ENCODE measurements at regions of chr2 and their contacts with region 1.

Region 1: DNA sequence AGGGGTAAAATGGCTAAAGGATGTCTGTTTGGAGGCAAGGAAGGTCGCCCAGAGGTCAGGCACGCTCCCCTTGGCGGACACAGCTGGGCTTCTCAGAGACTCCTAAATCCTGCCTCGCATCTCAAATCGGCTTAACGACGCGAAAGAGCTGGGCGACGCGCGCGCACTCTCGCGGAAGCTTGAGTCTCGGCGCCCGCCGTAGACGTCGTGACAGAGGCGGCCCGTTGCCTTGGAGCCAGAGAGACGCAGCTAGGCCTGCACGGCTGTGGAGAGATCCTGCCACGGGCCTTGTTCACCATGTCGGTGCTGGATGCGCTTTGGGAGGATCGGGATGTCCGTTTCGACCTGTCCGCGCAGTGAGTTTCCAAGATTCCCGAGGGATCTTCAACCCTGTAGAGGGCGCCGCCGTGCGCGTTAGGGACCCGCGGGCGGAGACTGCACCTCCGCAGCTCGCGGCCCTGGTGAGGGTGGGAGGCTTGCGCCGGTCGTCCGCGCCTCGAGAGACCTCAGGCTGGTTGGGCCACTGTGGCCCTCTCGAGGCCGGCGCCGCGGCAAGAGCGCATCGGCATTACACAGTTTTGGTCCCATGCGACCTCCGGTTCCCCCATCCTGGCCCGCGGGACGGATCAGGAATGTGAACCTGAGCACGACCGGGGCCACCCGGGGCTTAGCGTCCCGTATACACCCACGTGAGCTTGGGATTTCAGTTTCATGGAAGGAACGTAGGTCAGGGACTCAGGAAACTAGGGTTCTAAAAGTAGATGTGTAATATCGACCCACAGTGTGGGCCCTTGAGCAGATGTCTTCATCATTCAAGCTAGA is at the start of gene BBS5:
- DNase-seq: peak; percentile 72
- ATAC-seq: peak; percentile 83
- H3K4me3 ChIP-seq: peak within 1 kb of the TSS; percentile 67
- H3K27ac ChIP-seq: no peak within 1 kb of the TSS; the same call in 1 of the 2 replicates
- H3K4me1 ChIP-seq: peaks cover 18% of the 10 kb centered on the region
- H3K27me3 ChIP-seq: no peaks in the 10 kb centered on the region
- CTCF ChIP-seq: peak; percentile 76
- total RNA-seq, gene BBS5: 3.3 and 3.8 TPM in 2 replicates

Region 2: DNA sequence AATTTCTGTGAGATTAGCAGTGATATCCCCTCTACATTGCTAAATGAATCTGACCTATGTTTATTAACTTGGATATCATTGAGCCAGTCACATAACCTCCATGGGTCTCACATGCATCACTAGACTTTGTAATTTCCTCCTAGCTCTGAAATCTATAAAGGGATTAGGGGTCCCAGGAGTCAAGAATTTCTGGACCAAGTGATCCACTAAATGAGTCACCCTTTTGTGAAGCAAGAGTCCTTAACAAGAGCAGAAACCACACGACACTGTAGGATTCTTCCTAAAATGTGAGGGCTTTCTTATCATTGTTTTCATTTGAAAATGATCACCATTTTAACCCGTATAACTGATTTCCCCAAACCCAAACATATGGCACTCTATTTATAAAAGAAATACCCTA is 319.8 kb before region 1 on chr2:
- CTCF ChIA-PET with region 1: no interaction called
- POLR2A ChIA-PET with region 1: no interaction called
- intact Hi-C with region 1: no loop called
- DNase-seq: no peak
- ATAC-seq: no peak
- H3K4me3 ChIP-seq: no peak overlapping the region
- H3K27ac ChIP-seq: no peak overlapping the region
- H3K4me1 ChIP-seq: no peaks in the 10 kb centered on the region
- H3K27me3 ChIP-seq: peaks cover 12% of the 10 kb centered on the region; the same call in 1 of the 2 replicates
- CTCF ChIP-seq: no peak

Region 3: GRCh38 chr2:169507698-169508097 is 28.2 kb after region 1 on chr2:
- CTCF ChIA-PET with region 1: interaction called, 5 read pairs
- POLR2A ChIA-PET with region 1: interaction called, 8 read pairs
- intact Hi-C with region 1: loop called (anchors 1 kb)
- DNase-seq: peak; percentile 85
- ATAC-seq: peak; percentile 76
- H3K4me3 ChIP-seq: no peak overlapping the region
- H3K27ac ChIP-seq: peak overlapping the region; percentile 79
- H3K4me1 ChIP-seq: peaks cover 47% of the 10 kb centered on the region
- H3K27me3 ChIP-seq: no peaks in the 10 kb centered on the region
- CTCF ChIP-seq: no peak

Region 4: DNA sequence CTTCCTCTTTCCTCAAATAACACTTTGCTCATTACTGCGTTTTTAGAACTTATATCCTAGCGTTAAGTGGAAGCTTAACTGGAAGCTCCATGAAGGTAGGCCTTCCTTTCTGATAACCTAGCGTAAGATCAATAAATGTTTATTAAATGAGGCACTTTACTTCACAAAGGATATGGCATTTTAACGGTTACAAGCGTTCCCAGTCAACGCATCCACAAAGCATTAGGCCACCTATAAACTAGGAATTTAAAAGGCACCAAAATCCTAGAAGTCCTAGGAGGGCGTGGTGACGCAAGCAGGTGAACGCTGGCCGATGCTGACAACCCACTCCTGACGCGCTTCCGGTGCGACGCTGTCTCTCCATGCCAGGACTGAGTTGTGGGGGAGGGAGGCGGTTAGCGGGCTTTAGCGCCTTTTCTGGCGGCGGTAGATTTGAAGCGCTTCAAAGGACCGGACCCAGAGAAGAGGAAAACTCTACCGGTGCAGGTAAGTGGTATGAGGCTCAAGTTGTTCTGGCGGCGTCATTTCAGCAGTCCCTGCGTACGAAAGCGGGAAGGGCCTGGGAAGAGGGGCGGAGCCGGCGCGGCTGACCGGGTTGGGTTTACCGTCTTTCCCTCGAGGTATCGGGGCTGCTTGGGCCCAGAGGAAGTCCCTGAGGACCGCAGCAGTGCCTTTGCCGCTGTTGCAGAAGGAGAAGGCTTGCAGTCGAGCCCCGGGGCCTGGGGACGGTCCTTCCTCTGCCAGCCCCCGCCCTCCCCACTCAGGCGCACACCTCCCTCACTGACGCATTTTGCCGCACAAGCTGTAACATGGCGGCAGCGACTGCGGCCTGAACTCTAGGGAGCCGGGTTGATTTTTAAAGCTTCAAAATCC is 104.8 kb after region 1 on chr2 and contains the start of gene PPIG:
- CTCF ChIA-PET with region 1: interaction called, 3 read pairs
- POLR2A ChIA-PET with region 1: no interaction called
- intact Hi-C with region 1: loop called (anchors 10 kb)
- DNase-seq: peak; percentile 90
- ATAC-seq: peak; percentile 89
- H3K4me3 ChIP-seq: peak within 1 kb of the TSS; percentile 88
- H3K27ac ChIP-seq: peak within 1 kb of the TSS; percentile 82
- H3K4me1 ChIP-seq: peaks cover 5% of the 10 kb centered on the region; the same call in 1 of the 2 replicates
- H3K27me3 ChIP-seq: no peaks in the 10 kb centered on the region
- CTCF ChIP-seq: no peak
- total RNA-seq, gene PPIG: 20.9 and 33.7 TPM in 2 replicates

Region 5: DNA sequence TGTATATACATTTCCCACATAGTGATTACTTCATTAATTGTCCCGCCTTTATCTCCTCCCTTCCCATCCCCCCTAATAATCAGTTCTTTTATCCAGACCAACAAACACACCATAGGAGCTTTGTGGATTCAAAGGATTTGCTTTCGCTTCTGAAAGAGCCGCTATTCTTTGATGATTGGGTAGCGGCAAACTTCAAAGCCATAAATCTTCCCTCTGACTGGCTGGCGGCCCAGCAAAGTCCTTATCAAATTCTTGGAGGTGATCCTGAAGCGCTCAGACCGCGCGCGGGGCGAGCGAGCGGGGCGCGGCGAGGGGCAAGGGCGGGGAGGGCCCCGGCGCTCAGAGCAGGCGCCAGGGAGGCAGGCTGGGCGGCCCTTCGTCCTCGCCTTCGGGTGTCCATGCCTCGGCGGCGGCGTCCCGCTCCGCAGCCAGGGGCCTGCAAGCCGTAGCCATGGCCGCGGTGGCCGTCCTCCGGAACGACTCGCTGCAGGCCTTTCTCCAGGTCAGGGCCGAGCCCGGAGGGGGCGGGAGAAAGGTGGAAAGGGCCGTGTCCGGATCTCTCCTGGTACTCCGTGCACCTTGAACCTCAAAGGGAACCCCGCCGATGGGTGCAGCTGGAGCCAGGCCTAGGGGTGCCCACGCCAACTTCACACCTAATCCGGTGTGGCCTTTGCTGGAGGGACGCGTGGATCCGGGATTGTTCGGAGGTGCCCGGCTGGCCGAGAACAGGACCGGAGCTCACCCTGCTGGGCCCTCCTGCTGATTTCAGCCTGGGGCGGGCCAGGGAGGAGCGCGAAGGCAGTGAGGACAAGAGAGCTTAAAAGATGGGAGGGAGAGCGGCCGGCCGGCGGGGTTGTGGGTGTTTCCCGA is 1235.8 kb after region 1 on chr2 and contains the start of gene SP5:
- CTCF ChIA-PET with region 1: no interaction called
- POLR2A ChIA-PET with region 1: no interaction called
- intact Hi-C with region 1: no loop called
- DNase-seq: peak; percentile 65
- ATAC-seq: peak; percentile 73
- H3K4me3 ChIP-seq: peak within 1 kb of the TSS; percentile 74
- H3K27ac ChIP-seq: no peak within 1 kb of the TSS
- H3K4me1 ChIP-seq: no peaks in the 10 kb centered on the region; the same call in 1 of the 2 replicates
- H3K27me3 ChIP-seq: no peaks in the 10 kb centered on the region
- CTCF ChIP-seq: peak; percentile 35; the same call in 1 of the 2 replicates
- total RNA-seq, gene SP5: 0.47 and 4.8 TPM in 2 replicates